Prostate gland (tissue), 2 donors: ENCODE measurements at regions of chr3 and their contacts with region 1.

Region 1: DNA sequence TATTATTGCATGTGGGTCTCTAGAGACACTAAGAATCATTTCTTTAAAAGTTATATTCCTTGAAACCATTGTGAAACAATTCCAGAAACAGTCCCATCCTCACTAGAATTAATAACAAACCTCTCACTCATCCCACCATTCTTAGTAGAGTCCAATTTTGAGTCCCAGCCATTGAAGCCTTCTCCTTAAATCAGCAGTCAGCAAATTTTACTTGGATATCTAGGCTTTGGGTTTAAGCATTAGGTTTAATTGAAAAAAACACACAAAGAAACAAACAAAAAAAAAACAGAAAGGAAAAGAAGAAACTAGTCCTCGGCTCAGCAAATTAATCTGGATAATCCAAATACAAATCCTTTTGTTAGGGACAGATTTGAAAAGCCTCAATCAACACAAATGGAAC is 109.3 kb downstream of the LRRC3B start:
- DNase-seq: no peak
- H3K4me3 ChIP-seq: no peak overlapping the region
- H3K27ac ChIP-seq: no peak overlapping the region
- H3K4me1 ChIP-seq: no peaks in the 10 kb centered on the region
- H3K27me3 ChIP-seq: no peaks in the 10 kb centered on the region
- CTCF ChIP-seq: no peak
- POLR2A ChIP-seq: no peak

Region 2: GRCh38 chr3:26515351-26515750 is 216.5 kb before region 1 on chr3:
- intact Hi-C with region 1: loop called (anchors 10 kb)
- DNase-seq: no peak
- H3K4me3 ChIP-seq: no peak overlapping the region
- H3K27ac ChIP-seq: no peak overlapping the region
- H3K4me1 ChIP-seq: no peaks in the 10 kb centered on the region
- H3K27me3 ChIP-seq: no peaks in the 10 kb centered on the region
- CTCF ChIP-seq: no peak
- POLR2A ChIP-seq: no peak

Region 3: DNA sequence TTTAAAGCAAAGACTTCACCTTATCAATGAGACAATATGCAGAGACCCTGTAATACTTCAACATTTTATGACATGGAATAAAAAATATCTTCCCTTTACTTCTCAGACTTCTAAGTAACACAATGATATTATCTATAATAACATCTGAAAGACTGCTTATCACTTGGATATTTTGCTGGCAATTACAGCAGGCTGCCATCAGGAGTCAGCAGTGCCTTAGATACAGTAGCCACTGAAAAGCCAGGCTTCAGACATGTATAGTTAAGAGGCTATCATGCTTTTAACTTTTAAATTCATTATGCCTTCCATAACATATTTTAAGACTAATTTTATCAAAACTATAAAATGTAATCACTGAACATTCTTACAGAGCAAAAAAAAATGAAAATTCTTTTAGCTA is 409.8 kb after region 1 on chr3:
- intact Hi-C with region 1: no loop called
- DNase-seq: no peak
- H3K4me3 ChIP-seq: no peak overlapping the region
- H3K27ac ChIP-seq: no peak overlapping the region
- H3K4me1 ChIP-seq: no peaks in the 10 kb centered on the region
- H3K27me3 ChIP-seq: no peaks in the 10 kb centered on the region
- CTCF ChIP-seq: no peak
- POLR2A ChIP-seq: no peak